ENCODE measurements at regions of chr1 and their contacts with region 1.

Region 1: GRCh38 chr1:91924146-91924545 is 25.1 kb upstream of the BRDT start:
- DNase-seq: no peak
- H3K4me3 Mint-ChIP-seq: no peak overlapping the region
- H3K27ac Mint-ChIP-seq: no peak overlapping the region
- H3K4me1 Mint-ChIP-seq: peaks cover 7% of the 10 kb centered on the region
- H3K27me3 Mint-ChIP-seq: no peaks in the 10 kb centered on the region

Region 2: DNA sequence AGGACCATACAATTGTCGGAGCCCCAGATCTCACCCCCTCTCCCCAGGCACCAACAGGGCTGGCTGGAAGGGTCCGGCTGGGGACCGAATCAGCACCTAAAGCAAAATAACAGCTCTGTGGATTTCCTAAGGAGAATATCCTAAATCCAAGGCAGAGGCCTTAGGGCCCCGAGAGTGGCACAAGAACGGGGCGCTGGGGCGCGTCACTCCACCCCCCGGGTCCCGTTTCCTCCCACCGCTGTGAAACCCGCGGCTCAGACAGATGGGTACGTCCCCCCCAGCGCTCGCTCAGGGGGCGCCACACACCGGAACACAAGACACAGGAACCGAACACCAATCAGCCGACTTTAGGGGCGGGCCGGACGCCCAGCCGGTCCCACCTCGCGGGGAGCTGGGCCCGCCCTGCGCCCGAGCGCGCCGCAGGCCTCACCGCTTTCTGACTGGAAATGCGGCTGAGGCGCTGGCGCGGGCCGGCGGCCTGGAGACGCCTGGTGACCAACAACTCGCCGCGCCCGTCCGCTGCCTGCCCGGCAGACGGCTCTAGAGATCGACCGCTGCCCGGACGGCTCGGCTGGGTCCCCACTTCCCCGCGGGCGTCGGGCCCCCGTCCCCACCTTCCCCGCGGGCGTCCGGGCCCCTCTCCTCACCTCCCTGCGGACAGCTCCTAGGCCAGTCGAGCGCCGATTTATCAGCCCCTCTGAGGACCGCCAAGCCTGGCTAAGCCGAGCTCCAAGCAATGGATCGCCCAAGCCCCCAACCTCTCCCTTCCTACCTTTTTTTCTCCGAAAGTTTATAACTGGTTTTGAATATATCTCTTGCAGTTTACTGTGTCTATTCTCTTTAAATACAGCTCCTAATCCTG is 519.8 kb before region 1 on chr1 and contains the start of gene HFM1:
- CTCF ChIA-PET with region 1: no interaction called
- POLR2A ChIA-PET with region 1: no interaction called
- intact Hi-C with region 1: loop called (anchors 10 kb)
- DNase-seq: peak; percentile 50
- H3K4me3 Mint-ChIP-seq: peak within 1 kb of the TSS; percentile 55
- H3K27ac Mint-ChIP-seq: no peak within 1 kb of the TSS
- H3K4me1 Mint-ChIP-seq: peaks cover 4% of the 10 kb centered on the region
- H3K27me3 Mint-ChIP-seq: peaks cover 37% of the 10 kb centered on the region
- total RNA-seq, gene HFM1: not detected

Region 3: GRCh38 chr1:91913018-91913417 is 11.1 kb before region 1 on chr1:
- CTCF ChIA-PET with region 1: no interaction called
- POLR2A ChIA-PET with region 1: no interaction called
- intact Hi-C with region 1: no loop called
- DNase-seq: no peak
- H3K4me3 Mint-ChIP-seq: no peak overlapping the region
- H3K27ac Mint-ChIP-seq: no peak overlapping the region
- H3K4me1 Mint-ChIP-seq: no peaks in the 10 kb centered on the region
- H3K27me3 Mint-ChIP-seq: no peaks in the 10 kb centered on the region